A549 (cell line): ENCODE measurements at regions of chr3 and their contacts with region 1.

Region 1: DNA sequence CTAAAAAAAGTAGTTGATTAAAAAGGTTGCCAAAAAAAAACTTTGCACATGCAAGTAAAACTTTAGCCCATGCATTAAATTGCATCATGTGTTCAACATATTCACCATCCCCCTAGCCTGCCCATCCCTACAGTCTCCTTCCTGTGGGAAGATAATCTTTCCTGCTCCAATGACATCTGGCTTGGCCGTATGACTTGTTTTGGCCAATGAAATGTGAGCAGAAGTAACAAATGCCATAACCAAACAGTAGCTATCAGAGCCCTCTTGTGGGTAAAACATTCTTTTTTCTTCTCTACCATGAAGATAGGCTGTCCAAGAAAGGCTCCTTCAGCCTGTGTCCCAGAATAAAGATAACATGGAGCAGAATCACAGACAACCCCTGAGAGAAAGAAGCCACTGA is 15.3 kb downstream of the ERC2 start:
- DNase-seq: peak in 1 of 2 experiments; percentile 4
- ATAC-seq: no peak; a peak in 1 of 6 replicates
- H3K4me3 ChIP-seq: no peak overlapping the region
- H3K27ac ChIP-seq: no peak overlapping the region
- H3K4me1 ChIP-seq: no peaks in the 10 kb centered on the region
- CTCF ChIP-seq: no peak
- EP300 ChIP-seq: no peak
- POLR2A ChIP-seq: no peak
- RAD21 ChIP-seq: no peak

Region 2: DNA sequence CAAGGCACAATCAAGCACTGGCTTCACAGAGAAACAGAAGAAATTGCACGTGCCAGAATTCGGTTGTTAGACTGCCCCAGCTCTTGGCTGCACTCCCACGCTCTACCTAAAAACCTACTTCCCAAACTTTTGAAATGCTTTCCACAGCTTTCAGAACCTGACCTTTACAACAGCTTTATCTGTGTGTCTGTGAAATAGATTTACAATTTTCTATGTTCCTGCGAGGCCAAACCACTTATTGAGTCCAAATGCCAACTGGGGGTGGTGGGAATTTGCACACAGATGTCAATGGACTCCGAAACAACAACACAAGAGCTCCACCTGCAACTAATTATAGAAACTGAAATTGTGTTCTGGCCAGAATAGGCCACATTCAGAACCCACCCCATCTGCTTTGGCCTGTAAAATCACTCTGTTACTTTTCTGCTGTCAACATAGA is 29.3 kb before region 1 on chr3:
- CTCF ChIA-PET with region 1: interaction called, 12 read pairs
- POLR2A ChIA-PET with region 1: no interaction called
- DNase-seq: no peak
- ATAC-seq: no peak
- H3K4me3 ChIP-seq: no peak overlapping the region
- H3K27ac ChIP-seq: no peak overlapping the region
- H3K4me1 ChIP-seq: no peaks in the 10 kb centered on the region
- CTCF ChIP-seq: no peak
- EP300 ChIP-seq: no peak
- POLR2A ChIP-seq: no peak
- RAD21 ChIP-seq: no peak